ENCODE measurements at regions of chr3 and their contacts with region 1.

Region 1: DNA sequence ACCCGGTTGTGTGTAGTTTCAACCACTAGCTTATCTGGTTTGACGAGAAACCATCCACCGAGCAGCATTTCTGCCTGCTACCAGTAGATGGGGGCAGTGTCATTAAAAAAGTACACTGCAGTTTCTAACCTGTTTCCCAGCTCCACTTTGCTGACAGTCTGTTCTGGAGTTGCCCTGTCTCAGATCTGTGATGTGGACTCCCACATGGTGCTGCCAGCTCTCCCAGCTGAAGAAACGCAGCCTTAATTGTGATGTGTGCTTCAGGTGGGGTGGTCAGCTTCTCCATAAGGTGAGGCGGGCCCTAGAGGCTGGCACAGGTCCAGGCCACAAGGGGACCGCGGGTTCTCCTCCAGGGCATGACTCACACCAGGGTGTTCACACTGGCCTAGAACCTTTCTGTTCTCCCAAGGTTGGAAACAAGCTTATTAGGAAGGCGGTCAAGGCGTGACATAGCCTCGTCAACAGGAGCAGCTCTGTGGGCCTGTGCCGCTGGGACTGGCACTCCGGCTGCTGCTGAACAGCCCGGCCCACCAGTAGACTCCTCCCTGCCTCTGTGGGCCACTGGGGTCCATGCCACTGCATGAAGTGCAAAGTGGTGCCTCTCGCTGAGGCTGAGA is 2.9 kb upstream of the FAM43A start:
- DNase-seq: peak; percentile 71 to 86
- ATAC-seq: peak; percentile 81
- H3K4me3 ChIP-seq: no peak overlapping the region
- H3K27ac ChIP-seq: no peak overlapping the region
- H3K4me1 ChIP-seq: no peaks in the 10 kb centered on the region
- H3K27me3 ChIP-seq: peaks cover 0 to 1% of the 10 kb centered on the region in 2 donors

Region 2: DNA sequence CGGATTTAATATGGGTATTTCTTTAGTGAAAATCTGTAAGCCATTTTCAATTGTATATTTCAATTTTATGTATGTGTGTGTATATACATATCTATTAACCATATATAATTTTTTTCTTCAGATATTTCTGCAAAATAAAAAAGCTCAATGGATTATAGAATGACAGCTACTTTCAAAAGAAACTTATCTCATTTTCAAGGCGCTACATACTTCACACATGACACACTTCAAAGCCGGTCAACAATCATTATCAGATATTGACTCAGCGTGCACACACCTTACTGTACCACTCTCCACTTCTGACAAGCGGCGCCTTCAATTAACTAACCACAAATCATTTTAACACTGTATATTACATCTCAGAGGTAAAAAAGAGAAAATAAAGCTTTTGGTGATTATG is 235.6 kb before region 1 on chr3:
- intact Hi-C with region 1: no loop called
- DNase-seq: no peak
- ATAC-seq: no peak
- H3K4me3 ChIP-seq: no peak overlapping the region
- H3K27ac ChIP-seq: no peak overlapping the region
- H3K4me1 ChIP-seq: no peaks in the 10 kb centered on the region
- H3K27me3 ChIP-seq: no peaks in the 10 kb centered on the region

Region 3: DNA sequence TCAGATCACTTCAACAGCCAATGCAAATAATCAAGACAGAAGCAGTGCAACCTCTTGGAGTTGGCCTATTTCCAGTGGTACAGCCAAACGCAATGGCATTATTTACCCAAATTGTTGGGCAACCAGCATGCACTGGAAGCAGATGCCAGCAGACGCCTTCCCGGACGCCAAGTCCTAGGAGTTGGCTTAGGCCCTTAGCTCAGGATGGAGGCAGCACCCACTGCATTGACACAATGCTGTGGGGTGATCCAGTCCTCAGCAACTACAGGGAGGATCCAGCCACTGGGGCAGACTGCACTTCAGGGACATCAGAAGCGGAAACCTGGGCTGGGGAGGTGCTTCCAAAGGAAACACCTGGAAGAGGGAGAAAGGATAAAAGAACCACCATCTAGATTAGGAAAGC is 293.2 kb after region 1 on chr3:
- intact Hi-C with region 1: loop called (anchors 10 kb)
- DNase-seq: peak; percentile 74 to 85
- ATAC-seq: peak; percentile 77
- H3K4me3 ChIP-seq: no peak overlapping the region
- H3K27ac ChIP-seq: peak overlapping the region; percentile 16 to 65
- H3K4me1 ChIP-seq: no peaks in the 10 kb centered on the region
- H3K27me3 ChIP-seq: no peaks in the 10 kb centered on the region

Region 4: GRCh38 chr3:194985031-194985578 is 302.3 kb after region 1 on chr3:
- intact Hi-C with region 1: loop called in 1 of 2 experiments (anchors 10 kb)
- DNase-seq: peak; percentile 86 to 90
- ATAC-seq: peak; percentile 60
- H3K4me3 ChIP-seq: no peak overlapping the region
- H3K27ac ChIP-seq: no peak overlapping the region
- H3K4me1 ChIP-seq: no peaks in the 10 kb centered on the region
- H3K27me3 ChIP-seq: no peaks in the 10 kb centered on the region

Region 5: DNA sequence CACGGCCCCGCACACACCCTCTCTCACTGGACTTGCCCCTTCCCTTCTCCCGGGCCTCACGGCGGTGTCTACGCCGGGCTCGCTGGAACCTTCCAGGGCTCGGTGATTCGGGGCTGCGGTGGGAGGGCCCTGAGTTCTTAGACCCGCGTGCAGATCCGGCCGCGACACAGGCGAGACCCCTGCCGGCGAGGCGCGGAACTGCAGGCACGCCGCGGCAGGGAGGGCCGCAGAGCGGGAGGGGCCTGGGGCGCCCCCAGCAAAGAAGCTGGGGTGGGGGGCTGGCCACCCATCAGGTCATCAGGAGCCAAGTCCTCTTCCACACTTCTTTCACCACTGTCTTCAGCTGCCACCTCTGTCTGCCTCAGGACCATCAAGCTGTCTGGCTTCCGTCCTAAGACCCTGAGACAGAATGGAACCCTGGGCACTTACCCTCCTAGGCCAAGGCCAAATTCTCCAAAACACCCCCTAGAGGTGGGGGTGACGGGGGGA is 423.7 kb after region 1 on chr3:
- intact Hi-C with region 1: loop called (anchors 1 to 2 kb)
- DNase-seq: peak; percentile 80 to 91
- ATAC-seq: peak; percentile 92
- H3K4me3 ChIP-seq: no peak overlapping the region
- H3K27ac ChIP-seq: no peak overlapping the region
- H3K4me1 ChIP-seq: no peaks in the 10 kb centered on the region
- H3K27me3 ChIP-seq: no peaks in the 10 kb centered on the region

Region 6: DNA sequence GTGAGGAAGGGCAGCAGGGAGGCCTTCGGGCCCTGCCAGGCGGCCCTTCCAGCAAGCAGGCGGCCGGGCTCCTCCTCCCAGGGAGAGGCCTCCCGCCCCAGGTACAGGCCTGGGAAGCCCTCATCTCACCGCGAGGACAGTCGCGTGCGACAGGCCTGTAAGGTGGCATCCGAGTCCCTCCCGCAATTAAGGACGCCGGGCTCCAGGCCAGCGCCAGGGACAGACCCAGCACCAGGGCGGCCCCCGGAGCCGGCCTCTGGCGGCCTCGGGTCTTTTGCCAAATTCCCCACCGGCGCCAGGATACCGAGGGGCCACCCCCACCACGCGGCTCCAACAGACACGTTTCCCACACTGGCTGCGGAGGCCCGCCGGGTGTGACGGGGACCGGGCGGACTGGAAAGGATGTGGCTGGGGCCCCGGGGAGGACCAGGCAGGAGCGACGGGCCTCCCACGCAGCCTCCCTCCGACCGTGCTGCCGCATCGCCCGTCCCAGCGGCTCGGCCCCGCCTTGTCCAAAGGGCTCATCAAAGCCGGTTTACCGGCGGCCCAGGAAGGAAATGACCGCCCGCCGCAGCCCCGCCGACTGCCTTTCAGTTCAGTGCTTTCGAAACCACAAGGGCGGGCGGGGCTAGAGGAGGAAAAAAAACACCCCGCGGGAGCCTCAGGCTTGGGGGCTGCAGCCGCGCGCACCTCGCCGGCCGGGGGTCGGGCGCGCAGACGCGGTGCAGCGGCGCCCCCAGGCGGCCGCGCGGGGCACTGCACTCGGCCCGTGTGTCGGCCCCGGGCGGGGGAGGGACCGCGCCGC is 576.9 kb after region 1 on chr3:
- intact Hi-C with region 1: loop called (anchors 1 to 2 kb)
- DNase-seq: peak; percentile 92 to 94
- ATAC-seq: peak; percentile 92
- H3K4me3 ChIP-seq: peak overlapping the region; percentile 53 to 58
- H3K27ac ChIP-seq: peak overlapping the region in 1 of 2 donors; percentile 43
- H3K4me1 ChIP-seq: no peaks in the 10 kb centered on the region
- H3K27me3 ChIP-seq: no peaks in the 10 kb centered on the region

Region 7: DNA sequence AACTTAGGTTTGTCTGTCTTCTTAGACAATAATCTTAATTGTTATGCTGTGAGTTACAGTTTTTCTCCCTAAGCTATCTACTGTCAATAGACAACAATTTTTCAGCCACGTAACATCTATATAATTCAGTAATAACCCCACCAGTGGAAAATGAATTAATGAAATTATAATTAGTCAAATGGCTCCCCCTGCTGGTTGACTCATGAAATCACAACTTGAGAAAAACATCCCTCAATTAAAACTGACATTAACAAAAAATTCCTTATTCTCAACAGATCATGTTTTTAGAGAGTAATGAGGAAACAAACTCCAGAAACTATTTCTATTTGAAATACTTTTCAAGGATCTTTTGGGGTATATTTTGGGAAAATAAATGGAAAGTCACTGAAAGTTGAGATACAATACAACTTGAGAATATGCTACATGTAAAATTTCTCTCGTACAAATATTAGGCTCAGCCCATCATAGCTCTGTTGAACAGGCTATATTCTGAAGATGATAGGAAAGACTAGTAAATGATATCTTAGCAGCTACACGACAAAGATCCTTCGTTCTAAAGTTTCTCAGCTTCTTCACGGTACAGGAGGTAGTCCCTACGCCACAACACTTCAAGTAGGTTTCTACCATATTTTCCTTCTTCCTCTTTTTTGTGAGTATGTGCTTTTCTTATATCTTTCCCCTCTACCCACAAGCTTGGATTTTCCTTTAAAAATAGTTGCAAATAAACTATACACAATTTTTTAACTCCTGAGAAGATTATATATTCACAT is 839.6 kb after region 1 on chr3:
- intact Hi-C with region 1: loop called (anchors 5 to 10 kb)
- DNase-seq: no peak
- ATAC-seq: no peak
- H3K4me3 ChIP-seq: no peak overlapping the region
- H3K27ac ChIP-seq: no peak overlapping the region
- H3K4me1 ChIP-seq: no peaks in the 10 kb centered on the region
- H3K27me3 ChIP-seq: no peaks in the 10 kb centered on the region